Naive thymus-derived CD4-positive, alpha-beta T cell (primary cell): ENCODE measurements at regions of chr2 and their contacts with region 1.

Region 1: DNA sequence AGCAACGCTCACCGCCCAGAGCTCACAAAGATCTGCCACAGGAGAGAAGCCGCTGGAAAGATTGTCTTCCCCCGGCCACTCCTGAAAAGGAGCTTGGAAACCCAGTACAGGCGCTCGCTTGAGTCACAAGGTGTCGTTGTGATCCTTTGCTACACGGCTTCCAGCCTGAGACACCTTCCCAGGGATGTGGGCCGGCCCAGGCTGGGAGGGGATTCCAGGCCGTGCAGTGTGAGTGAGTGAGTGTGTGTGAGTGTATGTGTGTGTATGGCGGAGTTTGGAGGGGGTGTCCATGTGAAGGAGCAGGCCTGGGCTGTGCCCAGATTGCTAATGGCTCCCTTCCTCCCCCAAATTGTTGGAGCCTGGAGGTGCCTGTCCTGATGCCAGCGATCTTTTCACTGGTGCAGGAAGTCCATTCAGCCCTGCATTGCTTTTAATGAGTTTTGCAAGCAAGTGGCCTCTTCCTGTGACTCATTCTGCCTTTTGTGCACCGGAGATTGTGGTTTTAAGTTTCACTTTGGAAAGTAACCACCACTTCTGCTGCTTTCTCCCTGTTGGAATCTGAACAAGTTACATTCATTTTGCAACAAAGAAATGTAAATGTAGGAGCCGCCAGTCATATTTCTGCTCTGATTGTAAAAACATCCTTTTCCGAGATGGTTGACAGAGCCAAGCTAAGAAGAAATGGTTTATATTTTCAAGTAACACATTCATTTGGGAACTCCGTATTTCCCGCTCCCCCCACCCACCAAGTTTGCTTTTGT is 83.7 kb downstream of the LPIN1 start:
- DNase-seq: peak in 8 of 9 donors; percentile 53 to 73 (median 63)
- ATAC-seq: peak; percentile 86
- H3K4me3 ChIP-seq: peak overlapping the region; percentile 60
- H3K4me3 Mint-ChIP-seq: peak overlapping the region; percentile 80 to 97 (median 84)
- H3K27ac ChIP-seq: peak overlapping the region; percentile 46
- H3K27ac Mint-ChIP-seq: peak overlapping the region; percentile 21 to 87 (median 78)
- H3K4me1 ChIP-seq: peaks cover 20% of the 10 kb centered on the region in 2 donors
- H3K4me1 Mint-ChIP-seq: peaks cover 18 to 44% (median 33%) of the 10 kb centered on the region in 7 donors
- H3K27me3 ChIP-seq: no peaks in the 10 kb centered on the region
- H3K27me3 Mint-ChIP-seq: peaks cover 0 to 50% (median 0%) of the 10 kb centered on the region in 5 donors

Region 2: DNA sequence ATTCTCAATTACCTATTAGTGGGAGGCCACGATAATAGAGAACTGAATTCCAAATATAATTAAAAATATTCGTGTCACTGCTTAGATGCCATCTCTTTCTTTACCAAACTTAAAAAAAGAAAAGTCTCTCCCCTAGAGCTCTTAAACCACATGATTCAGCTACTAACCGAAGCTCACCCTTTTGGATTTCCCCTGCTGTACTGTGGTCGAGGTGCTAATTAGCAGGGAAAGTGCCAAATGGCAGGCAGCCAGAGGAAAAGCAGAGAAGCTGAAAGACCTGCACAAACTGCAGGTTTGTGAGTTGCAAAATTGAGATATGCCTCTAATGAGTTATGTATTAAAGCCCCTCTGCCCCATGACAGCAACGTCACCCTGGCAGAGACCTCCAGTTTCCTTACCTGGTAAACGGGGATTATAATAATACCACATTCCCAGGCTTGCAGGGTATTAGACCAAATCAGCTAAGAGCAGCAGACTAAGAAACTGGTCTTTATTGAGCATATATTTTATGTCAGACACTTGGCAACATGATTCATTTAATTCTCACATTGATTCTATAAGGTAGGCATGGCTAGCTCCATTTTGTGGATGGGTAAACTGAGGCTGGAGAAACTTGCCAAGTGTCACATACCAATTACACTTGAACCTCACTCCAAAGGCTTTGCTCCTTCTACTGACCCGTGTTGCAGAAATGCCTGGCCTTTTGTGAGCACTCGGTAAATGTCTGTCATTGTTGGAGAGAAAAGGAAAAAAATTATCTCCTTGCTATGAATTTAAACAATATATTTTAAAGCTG is 176.0 kb after region 1 on chr2:
- CTCF ChIA-PET with region 1: no interaction called
- POLR2A ChIA-PET with region 1: no interaction called
- intact Hi-C with region 1: loop called in 1 of 2 experiments (anchors 5 kb)
- DNase-seq: peak; percentile 25 to 64 (median 45)
- ATAC-seq: peak; percentile 94
- H3K4me3 ChIP-seq: no peak overlapping the region
- H3K4me3 Mint-ChIP-seq: peak overlapping the region in 6 of 10 donors; percentile 15 to 57 (median 42)
- H3K27ac ChIP-seq: no peak overlapping the region
- H3K27ac Mint-ChIP-seq: peak overlapping the region in 4 of 9 donors; percentile 9 to 52 (median 38)
- H3K4me1 ChIP-seq: peaks cover 17 to 20% of the 10 kb centered on the region in 2 donors
- H3K4me1 Mint-ChIP-seq: peaks cover 12 to 42% (median 29%) of the 10 kb centered on the region in 7 donors
- H3K27me3 ChIP-seq: peaks cover 0 to 12% of the 10 kb centered on the region in 2 donors
- H3K27me3 Mint-ChIP-seq: peaks cover 0 to 56% (median 2%) of the 10 kb centered on the region in 5 donors

Region 3: GRCh38 chr2:12293874-12294273 is 463.7 kb after region 1 on chr2:
- CTCF ChIA-PET with region 1: no interaction called
- POLR2A ChIA-PET with region 1: no interaction called
- intact Hi-C with region 1: loop called in 1 of 2 experiments (anchors 1 kb)
- DNase-seq: no peak
- ATAC-seq: peak; percentile 27
- H3K4me3 ChIP-seq: no peak overlapping the region
- H3K4me3 Mint-ChIP-seq: peak overlapping the region in 5 of 10 donors; percentile 13 to 75 (median 60)
- H3K27ac ChIP-seq: no peak overlapping the region
- H3K27ac Mint-ChIP-seq: peak overlapping the region in 4 of 9 donors; percentile 18 to 90 (median 68)
- H3K4me1 ChIP-seq: peaks cover 0 to 16% of the 10 kb centered on the region in 2 donors
- H3K4me1 Mint-ChIP-seq: peaks cover 19 to 53% (median 40%) of the 10 kb centered on the region in 7 donors
- H3K27me3 ChIP-seq: no peaks in the 10 kb centered on the region
- H3K27me3 Mint-ChIP-seq: peaks cover 0 to 4% (median 0%) of the 10 kb centered on the region in 5 donors

Region 4: GRCh38 chr2:12320991-12321641 is 491.0 kb after region 1 on chr2:
- CTCF ChIA-PET with region 1: interaction called, 3 read pairs
- POLR2A ChIA-PET with region 1: no interaction called
- intact Hi-C with region 1: loop called in 1 of 2 experiments (anchors 10 kb)
- DNase-seq: no peak
- ATAC-seq: no peak
- H3K4me3 ChIP-seq: no peak overlapping the region
- H3K4me3 Mint-ChIP-seq: no peak overlapping the region
- H3K27ac ChIP-seq: no peak overlapping the region
- H3K27ac Mint-ChIP-seq: no peak overlapping the region
- H3K4me1 ChIP-seq: no peaks in the 10 kb centered on the region
- H3K4me1 Mint-ChIP-seq: peaks cover 0 to 11% (median 0%) of the 10 kb centered on the region in 7 donors
- H3K27me3 ChIP-seq: no peaks in the 10 kb centered on the region
- H3K27me3 Mint-ChIP-seq: peaks cover 0 to 16% (median 0%) of the 10 kb centered on the region in 5 donors

Region 5: DNA sequence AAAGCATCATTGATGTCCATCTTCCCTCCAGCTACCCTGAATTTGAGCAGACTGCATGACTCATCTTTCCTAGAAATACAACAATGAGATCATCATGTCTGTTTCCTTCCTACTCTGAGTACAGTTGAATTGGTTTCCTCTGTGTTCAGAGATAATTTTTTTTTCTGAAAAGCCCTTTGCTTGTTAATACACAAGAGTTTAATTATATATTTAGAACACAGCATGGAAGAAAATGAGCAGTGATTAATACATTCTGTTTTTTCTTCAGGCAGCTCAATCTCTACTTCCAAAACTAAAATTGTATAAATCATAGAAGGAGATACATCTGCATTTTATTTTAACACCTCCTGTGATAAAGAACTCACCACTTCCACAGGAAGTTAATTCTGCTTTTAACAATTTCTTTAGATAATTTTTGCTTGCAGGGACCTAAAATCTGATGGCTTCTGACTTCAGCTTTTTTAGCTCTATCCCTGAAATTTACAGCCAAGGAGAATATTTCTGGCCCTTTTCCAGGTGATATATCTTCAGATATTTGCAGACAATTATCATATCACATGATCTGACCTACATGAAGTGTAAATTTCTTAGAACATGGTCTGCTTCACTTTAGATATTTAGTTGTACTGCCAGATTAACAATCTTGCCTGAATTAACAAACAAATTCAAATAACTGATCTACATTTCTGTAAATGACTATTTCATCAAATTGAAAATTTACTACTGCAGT is 1135.6 kb after region 1 on chr2:
- CTCF ChIA-PET with region 1: no interaction called
- POLR2A ChIA-PET with region 1: no interaction called
- intact Hi-C with region 1: loop called in 1 of 2 experiments (anchors 1 kb)
- DNase-seq: peak in 5 of 9 donors; percentile 4 to 25 (median 9)
- ATAC-seq: peak; percentile 74
- H3K4me3 ChIP-seq: no peak overlapping the region
- H3K4me3 Mint-ChIP-seq: peak overlapping the region in 3 of 10 donors; percentile 29 to 63 (median 45)
- H3K27ac ChIP-seq: no peak overlapping the region
- H3K27ac Mint-ChIP-seq: peak overlapping the region in 2 of 9 donors; percentile 23 to 36
- H3K4me1 ChIP-seq: peaks cover 10 to 24% of the 10 kb centered on the region in 2 donors
- H3K4me1 Mint-ChIP-seq: peaks cover 8 to 42% (median 15%) of the 10 kb centered on the region in 7 donors
- H3K27me3 ChIP-seq: no peaks in the 10 kb centered on the region
- H3K27me3 Mint-ChIP-seq: peaks cover under 1 to 29% (median 10%) of the 10 kb centered on the region in 5 donors